ENCODE measurements at regions of chr2 and their contacts with region 1.

Region 1: DNA sequence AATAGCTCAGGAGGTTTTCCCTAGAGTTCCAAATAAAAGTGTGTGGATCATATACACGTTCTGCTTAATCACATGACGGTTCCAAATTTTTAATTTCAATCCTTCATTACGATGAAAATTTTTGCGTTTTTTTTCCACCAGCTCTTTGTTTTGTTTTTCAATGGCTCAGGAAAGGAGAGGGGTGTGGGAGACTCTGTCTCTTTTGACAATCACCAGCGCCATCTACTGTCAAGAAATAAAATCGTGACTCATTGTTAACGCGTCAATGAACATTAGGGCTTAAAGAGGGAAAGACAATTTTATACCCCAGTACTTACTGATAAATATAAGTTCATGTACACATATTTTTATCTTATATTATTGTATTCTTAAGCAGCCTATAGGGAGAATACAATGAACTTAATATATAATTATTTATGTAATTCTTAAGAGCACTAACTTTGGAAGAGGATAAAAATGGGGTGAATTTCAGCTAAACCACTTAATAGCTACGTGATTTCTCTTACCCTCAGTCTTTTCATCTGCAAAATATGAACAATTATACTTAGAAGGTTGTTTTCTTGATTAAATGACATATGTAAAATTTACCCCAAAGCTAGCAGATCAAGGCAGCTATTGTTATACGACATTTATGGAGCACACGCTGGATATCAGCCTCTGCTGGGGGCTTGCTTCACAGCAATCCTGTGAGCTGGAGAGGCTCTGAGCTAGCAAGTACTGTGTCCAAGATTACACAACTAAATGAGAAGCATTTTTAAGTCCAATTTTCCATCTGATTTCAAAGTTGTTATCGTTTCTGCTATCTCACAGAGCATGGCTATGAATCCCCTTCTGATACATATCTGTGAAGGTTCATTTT is 47.4 kb upstream of the RMDN2 start:
- DNase-seq: peak; percentile 40
- ATAC-seq: peak; percentile 72
- H3K4me3 Mint-ChIP-seq: no peak overlapping the region
- H3K27ac Mint-ChIP-seq: no peak overlapping the region
- H3K4me1 Mint-ChIP-seq: peaks cover 9% of the 10 kb centered on the region
- H3K27me3 Mint-ChIP-seq: peaks cover 13% of the 10 kb centered on the region

Region 2: DNA sequence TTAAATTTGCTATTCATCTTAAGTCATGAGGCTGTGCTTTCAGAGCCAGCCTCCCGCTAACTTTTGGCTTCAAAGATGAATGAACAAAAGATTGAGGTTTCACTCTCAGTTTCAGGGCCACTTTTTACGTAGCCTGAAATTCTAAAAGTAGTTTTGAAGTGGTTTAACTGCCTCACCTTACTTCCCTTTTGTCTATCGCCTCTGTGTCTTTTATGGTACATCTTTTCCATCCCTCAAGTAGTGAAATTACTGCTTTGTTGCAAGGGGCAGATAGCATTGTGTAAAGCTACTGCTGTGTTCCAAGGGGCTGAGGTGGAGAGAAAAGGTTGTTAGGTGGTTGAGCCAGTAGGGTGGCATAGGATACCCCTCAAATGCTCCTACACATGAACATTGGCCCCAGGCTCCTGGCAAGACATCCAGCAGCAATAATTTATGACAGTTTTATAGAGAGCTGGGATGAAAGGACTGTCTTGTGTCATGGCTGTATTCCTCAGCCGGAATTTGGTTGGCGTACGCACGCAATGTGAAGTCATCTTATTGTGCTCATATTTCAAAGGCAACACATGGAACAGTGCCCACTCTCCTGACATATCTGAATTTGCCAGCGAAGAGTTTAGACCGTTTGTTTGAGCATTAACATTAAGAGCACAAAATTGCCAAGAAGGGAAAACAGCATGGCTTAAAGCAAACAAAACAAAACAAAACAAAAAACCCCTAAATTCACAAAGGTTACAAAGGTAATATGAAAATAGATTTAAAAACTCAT is 501.1 kb before region 1 on chr2:
- CTCF ChIA-PET with region 1: interaction called, 13 read pairs
- POLR2A ChIA-PET with region 1: no interaction called
- DNase-seq: peak; percentile 66
- ATAC-seq: peak; percentile 95
- H3K4me3 Mint-ChIP-seq: peak overlapping the region; percentile 50
- H3K27ac Mint-ChIP-seq: peak overlapping the region; percentile 5
- H3K4me1 Mint-ChIP-seq: peaks cover 31% of the 10 kb centered on the region
- H3K27me3 Mint-ChIP-seq: peaks cover 46% of the 10 kb centered on the region

Region 3: GRCh38 chr2:37402636-37403035 is 475.1 kb before region 1 on chr2:
- CTCF ChIA-PET with region 1: interaction called, 135 read pairs
- POLR2A ChIA-PET with region 1: no interaction called
- DNase-seq: no peak
- ATAC-seq: no peak
- H3K4me3 Mint-ChIP-seq: no peak overlapping the region
- H3K27ac Mint-ChIP-seq: no peak overlapping the region
- H3K4me1 Mint-ChIP-seq: no peaks in the 10 kb centered on the region
- H3K27me3 Mint-ChIP-seq: peaks cover 13% of the 10 kb centered on the region

Region 4: DNA sequence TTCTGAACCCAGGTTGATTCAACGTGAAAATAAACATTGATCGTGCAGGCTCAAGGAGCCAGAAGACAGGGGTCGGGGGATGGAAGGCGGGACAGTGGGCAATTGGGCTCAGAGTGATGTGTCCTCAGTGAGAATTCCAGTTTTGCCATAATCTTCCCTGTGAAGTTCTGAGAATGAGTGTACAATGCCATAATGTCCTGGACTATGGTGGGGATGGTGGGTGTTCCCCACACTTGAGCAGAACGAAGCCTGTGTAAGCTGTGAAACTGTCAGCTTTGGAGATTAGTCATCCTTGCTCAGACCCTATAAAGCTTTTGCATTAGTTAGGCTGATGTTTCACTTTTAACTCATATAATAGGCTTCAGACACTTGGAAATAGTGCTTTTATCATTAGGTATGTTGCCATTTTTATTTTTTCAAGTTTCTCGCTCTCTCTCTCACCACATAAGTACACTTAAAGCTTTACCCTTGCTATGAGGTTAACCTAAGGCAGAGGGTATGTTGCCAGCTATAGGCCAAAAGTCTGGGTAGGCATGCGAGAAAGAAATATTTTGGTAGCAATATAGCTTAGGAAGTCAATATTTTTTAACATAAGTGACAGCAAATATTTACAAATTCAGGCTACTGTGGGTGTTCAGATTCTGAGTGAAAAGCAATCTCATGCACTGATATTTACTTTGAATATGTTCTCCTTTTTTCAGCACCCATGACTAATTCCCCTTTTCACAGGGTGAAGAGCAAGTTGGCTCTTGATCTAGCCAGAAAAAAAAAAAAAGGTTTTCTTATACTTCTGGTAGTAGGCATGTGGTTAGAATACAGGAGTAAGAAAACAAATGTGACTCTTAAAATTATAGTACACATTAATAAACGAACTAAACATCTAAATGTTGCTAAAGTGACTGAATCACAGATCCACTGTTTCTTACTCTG is 253.4 kb before region 1 on chr2:
- CTCF ChIA-PET with region 1: interaction called, 13 read pairs
- POLR2A ChIA-PET with region 1: no interaction called
- DNase-seq: peak; percentile 38
- ATAC-seq: peak; percentile 71
- H3K4me3 Mint-ChIP-seq: peak overlapping the region; percentile 11
- H3K27ac Mint-ChIP-seq: peak overlapping the region; percentile 64
- H3K4me1 Mint-ChIP-seq: peaks cover 48% of the 10 kb centered on the region
- H3K27me3 Mint-ChIP-seq: no peaks in the 10 kb centered on the region

Region 5: GRCh38 chr2:37851828-37852584 is 25.7 kb before region 1 on chr2:
- CTCF ChIA-PET with region 1: interaction called, 15 read pairs
- POLR2A ChIA-PET with region 1: no interaction called
- DNase-seq: no peak
- ATAC-seq: no peak
- H3K4me3 Mint-ChIP-seq: no peak overlapping the region
- H3K27ac Mint-ChIP-seq: peak overlapping the region; percentile 32
- H3K4me1 Mint-ChIP-seq: peaks cover 18% of the 10 kb centered on the region
- H3K27me3 Mint-ChIP-seq: peaks cover 3% of the 10 kb centered on the region

Region 6: GRCh38 chr2:37897506-37897905 is 19.8 kb after region 1 on chr2:
- CTCF ChIA-PET with region 1: interaction called, 12 read pairs
- POLR2A ChIA-PET with region 1: no interaction called
- DNase-seq: no peak
- ATAC-seq: no peak
- H3K4me3 Mint-ChIP-seq: no peak overlapping the region
- H3K27ac Mint-ChIP-seq: no peak overlapping the region
- H3K4me1 Mint-ChIP-seq: peaks cover 10% of the 10 kb centered on the region
- H3K27me3 Mint-ChIP-seq: peaks cover 2% of the 10 kb centered on the region

Region 7: GRCh38 chr2:38106405-38107094 is 228.9 kb after region 1 on chr2:
- CTCF ChIA-PET with region 1: no interaction called
- POLR2A ChIA-PET with region 1: no interaction called
- DNase-seq: no peak
- ATAC-seq: no peak
- H3K4me3 Mint-ChIP-seq: no peak overlapping the region
- H3K27ac Mint-ChIP-seq: no peak overlapping the region
- H3K4me1 Mint-ChIP-seq: peaks cover 16% of the 10 kb centered on the region
- H3K27me3 Mint-ChIP-seq: peaks cover 13% of the 10 kb centered on the region

Measured in activated CD8-positive, alpha-beta T cell treated with anti-CD3 and anti-CD28 coated beads, Interleukin-2, amount 10 ng/mL, durations not matched to agents 7 days and 5 days (primary cell).